ENCODE measurements at regions of chr14 and their contacts with region 1.

Region 1: GRCh38 chr14:54805521-54806322 is 96.9 kb downstream of the GCH1 start:
- DNase-seq: no peak
- H3K4me3 ChIP-seq: no peak overlapping the region
- H3K27me3 ChIP-seq: peaks cover 1% of the 10 kb centered on the region
- CTCF ChIP-seq: peak; percentile 97

Region 2: GRCh38 chr14:54366736-54367735 is 438.7 kb before region 1 on chr14:
- CTCF ChIA-PET with region 1: interaction called, 19 read pairs
- POLR2A ChIA-PET with region 1: no interaction called
- DNase-seq: no peak
- H3K4me3 ChIP-seq: no peak overlapping the region
- H3K27me3 ChIP-seq: no peaks in the 10 kb centered on the region
- CTCF ChIP-seq: peak; percentile 78

Region 3: DNA sequence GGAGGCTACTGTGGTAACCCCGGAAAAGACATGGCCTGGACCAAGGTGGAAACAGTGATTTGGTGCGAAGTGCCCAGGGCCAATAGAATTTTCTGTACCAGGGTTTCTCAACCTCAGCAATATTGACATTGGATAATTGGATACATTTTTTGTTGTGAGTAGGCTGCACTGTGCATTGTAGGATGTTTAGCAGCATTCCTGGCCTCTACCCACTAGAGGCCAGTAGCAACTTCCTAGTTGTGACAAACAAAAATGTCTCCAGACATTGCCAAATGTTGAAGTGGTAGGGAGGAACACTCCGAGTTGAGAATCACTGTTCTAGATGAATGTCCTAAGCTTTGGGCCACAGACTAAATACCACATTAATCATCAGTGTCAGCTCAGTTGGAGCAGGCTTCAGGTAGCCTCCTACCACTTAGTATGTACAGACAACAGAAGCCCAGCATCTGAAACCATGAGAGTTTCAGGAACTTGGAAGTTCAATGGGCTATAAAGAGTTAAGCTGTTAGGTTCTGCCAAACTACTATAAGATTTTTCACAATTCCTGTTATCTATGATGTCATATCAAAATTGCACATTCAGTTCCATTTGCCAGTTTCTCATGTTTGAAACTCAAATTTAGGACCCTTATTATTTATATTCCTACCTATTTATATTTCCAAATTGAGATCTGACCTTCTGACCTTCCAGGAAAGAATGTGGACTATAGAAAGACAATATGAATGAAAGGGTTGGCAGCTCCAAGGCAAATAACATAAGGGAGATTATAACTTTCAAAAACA is 302.1 kb before region 1 on chr14:
- CTCF ChIA-PET with region 1: interaction called, 16 read pairs
- POLR2A ChIA-PET with region 1: no interaction called
- DNase-seq: no peak
- H3K4me3 ChIP-seq: no peak overlapping the region
- H3K27me3 ChIP-seq: no peaks in the 10 kb centered on the region
- CTCF ChIP-seq: peak; percentile 62

Region 4: GRCh38 chr14:54566410-54567223 is 239.1 kb before region 1 on chr14 and contains the start of gene SAMD4A:
- CTCF ChIA-PET with region 1: interaction called, 27 read pairs
- POLR2A ChIA-PET with region 1: no interaction called
- DNase-seq: no peak
- H3K4me3 ChIP-seq: peak within 1 kb of the TSS; percentile 86
- H3K27me3 ChIP-seq: no peaks in the 10 kb centered on the region
- CTCF ChIP-seq: peak; percentile 46; the same call in 1 of the 2 replicates
- polyA plus RNA-seq, gene SAMD4A: 13.4 and 16.9 TPM in 2 replicates

Region 5: DNA sequence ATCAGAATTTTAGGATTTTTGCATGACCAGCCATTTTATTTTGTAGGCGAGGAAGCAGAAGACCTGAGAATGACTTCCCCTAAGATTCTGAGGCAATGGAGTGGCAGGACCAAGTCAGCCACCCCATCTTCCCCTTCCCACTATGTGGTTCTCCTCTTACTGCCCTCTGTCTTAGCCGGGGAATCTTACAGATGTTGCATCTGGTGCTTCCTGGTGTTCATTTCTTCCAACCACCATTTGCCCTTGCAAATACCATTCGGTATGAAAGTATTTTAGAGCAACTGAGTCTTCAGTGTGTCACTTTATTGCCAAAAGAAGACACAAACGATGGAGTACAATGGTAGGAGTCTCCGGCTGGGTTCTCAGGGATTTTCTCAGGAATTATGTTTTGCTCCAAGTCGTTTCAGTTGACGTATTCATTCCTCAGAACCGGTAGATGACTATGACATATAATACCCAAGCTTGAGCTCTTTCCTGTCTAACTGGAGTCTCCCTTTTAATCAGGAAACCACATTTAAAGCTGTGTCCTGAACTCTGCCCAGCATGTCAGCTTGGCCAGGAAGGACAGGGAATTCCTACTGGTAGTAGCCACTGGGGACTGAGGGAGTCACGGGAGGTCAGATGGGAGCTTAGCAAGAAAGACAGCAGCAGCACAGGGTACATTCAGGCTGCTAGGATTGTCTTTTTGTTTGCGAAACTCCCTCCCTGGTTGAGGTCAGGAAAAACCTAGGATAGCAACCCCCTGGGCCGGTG is 151.8 kb before region 1 on chr14:
- CTCF ChIA-PET with region 1: no interaction called
- POLR2A ChIA-PET with region 1: no interaction called
- DNase-seq: no peak
- H3K4me3 ChIP-seq: no peak overlapping the region
- H3K27me3 ChIP-seq: no peaks in the 10 kb centered on the region
- CTCF ChIP-seq: no peak

Region 6: GRCh38 chr14:54773171-54773975 is 32.3 kb before region 1 on chr14:
- CTCF ChIA-PET with region 1: interaction called, 24 read pairs
- POLR2A ChIA-PET with region 1: no interaction called
- DNase-seq: peak; percentile 98
- H3K4me3 ChIP-seq: no peak overlapping the region
- H3K27me3 ChIP-seq: no peaks in the 10 kb centered on the region
- CTCF ChIP-seq: peak; percentile 69

Region 7: DNA sequence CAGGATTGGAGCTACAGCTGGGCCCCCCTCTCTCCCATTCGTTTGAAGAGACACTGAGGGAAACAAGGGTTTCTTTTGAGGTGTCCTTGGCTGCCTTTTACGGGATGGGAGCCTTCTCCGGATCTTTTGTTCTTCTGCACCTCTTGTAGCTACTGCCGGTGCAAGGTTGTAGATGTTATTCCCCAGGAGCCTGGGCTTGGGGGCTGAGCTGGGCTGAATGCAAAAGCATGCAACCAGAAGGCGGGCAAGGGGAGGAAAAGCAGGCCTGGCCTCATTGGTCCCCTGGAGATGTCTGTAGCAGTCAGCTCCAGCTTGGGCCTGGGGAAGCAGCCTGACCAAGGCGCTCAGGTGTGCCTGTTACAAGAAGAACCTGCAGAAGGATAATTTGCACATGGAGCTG is 13.4 kb before region 1 on chr14:
- CTCF ChIA-PET with region 1: interaction called, 12 read pairs
- POLR2A ChIA-PET with region 1: no interaction called
- DNase-seq: no peak
- H3K4me3 ChIP-seq: no peak overlapping the region
- H3K27me3 ChIP-seq: no peaks in the 10 kb centered on the region
- CTCF ChIP-seq: no peak

Region 8: DNA sequence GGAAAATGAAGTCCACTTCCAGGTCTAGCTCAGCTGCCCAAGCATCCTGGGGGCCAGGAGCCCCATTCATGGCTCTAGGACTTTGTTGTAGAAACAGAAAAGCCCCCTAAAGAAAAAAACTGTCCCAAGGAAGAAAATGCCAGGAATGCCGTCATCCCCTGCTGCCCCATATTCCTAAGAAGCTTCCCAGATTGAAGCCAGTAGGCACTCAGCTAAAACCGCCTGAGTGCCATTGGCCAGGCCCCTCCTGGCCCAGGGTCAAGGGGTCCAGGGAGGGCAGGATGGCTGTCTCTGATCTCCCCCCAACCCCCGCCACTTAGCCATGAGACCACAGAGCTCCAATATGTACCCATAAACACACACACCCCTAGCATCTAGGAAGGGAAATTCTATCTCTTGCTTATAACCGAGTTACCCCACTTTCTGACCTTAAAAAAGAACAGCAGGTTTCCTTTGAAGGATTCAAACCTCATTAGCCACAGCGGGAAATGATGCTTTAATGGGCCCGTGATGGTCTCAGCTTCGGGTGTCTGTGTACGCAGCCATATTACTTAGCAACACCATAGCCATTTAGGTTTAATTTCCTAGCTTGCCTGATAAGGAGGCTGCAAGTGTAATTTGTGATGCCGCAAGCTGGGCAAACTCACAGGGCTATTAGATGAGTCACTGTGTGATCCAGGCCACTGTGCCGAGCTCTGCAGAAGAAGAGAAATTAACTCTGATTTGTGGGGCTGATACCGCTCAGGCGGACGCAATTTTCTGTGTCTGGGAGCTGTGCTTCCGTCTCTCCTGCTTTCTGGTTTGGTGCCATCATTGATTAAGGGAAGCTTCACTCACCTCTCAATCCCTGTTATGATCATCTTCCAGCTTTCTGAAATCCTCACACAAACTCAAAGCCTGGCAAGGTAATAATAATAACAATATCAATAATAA is 12.7 kb after region 1 on chr14:
- CTCF ChIA-PET with region 1: interaction called, 53 read pairs
- POLR2A ChIA-PET with region 1: no interaction called
- DNase-seq: peak; percentile 39
- H3K4me3 ChIP-seq: no peak overlapping the region
- H3K27me3 ChIP-seq: peaks cover 4% of the 10 kb centered on the region
- CTCF ChIP-seq: no peak